ENCODE measurements at regions of chr3 and their contacts with region 1.

Region 1: GRCh38 chr3:64865863-64866570 is 178.2 kb upstream of the ADAMTS9 start:
- DNase-seq: no peak
- H3K4me3 ChIP-seq: no peak overlapping the region
- H3K27ac ChIP-seq: no peak overlapping the region
- H3K4me1 ChIP-seq: peaks cover 8% of the 10 kb centered on the region
- H3K27me3 ChIP-seq: no peaks in the 10 kb centered on the region
- CTCF ChIP-seq: no peak

Region 2: GRCh38 chr3:64756388-64756986 is 109.5 kb before region 1 on chr3:
- intact Hi-C with region 1: no loop called
- DNase-seq: no peak
- H3K4me3 ChIP-seq: no peak overlapping the region
- H3K27ac ChIP-seq: no peak overlapping the region
- H3K4me1 ChIP-seq: no peaks in the 10 kb centered on the region
- H3K27me3 ChIP-seq: no peaks in the 10 kb centered on the region
- CTCF ChIP-seq: no peak

Region 3: GRCh38 chr3:65013053-65013452 is 147.0 kb after region 1 on chr3:
- intact Hi-C with region 1: loop called (anchors 5 kb)
- DNase-seq: no peak
- H3K4me3 ChIP-seq: no peak overlapping the region
- H3K27ac ChIP-seq: no peak overlapping the region
- H3K4me1 ChIP-seq: no peaks in the 10 kb centered on the region
- H3K27me3 ChIP-seq: no peaks in the 10 kb centered on the region
- CTCF ChIP-seq: no peak

Region 4: DNA sequence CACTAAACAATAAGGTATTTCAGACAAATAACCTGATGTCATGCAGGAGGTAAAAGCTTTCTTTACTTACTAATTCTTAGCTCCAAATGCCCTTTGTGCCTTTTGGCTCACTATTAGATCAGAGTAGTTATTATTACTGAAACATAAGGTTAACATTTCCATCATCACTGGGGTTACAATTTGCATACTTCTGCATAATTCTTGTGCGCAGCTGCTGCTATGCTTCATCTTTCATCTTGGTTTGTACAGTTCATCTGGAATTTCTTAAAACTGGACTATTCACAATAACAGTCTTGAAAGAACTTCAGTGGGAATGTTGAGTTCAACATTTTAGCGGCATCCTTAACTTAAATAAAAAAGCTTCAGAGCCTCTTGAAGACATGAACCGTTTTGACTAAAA is 205.0 kb after region 1 on chr3:
- intact Hi-C with region 1: no loop called
- DNase-seq: no peak
- H3K4me3 ChIP-seq: no peak overlapping the region
- H3K27ac ChIP-seq: no peak overlapping the region
- H3K4me1 ChIP-seq: no peaks in the 10 kb centered on the region
- H3K27me3 ChIP-seq: no peaks in the 10 kb centered on the region
- CTCF ChIP-seq: no peak

Region 5: DNA sequence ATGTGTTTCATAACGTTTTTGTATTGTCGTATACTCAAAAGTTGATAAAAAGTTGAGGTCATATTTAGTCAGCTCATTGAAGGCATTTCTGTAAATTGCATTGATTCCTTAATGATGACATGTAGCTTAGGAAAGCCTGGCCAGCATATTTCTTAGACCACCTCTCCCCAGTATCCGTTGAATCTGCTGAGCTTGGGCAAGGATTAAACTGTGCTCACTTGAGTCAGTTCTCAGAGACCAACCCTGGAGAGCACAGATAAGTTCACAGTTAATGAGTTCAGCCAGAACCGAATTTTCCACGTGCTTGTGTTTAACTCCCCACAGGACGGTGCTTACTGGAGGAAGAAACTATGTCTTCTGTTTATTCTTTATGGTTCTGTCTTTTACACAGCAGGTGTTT is 1487.5 kb after region 1 on chr3:
- intact Hi-C with region 1: no loop called
- DNase-seq: no peak
- H3K4me3 ChIP-seq: no peak overlapping the region
- H3K27ac ChIP-seq: no peak overlapping the region
- H3K4me1 ChIP-seq: no peaks in the 10 kb centered on the region
- H3K27me3 ChIP-seq: no peaks in the 10 kb centered on the region
- CTCF ChIP-seq: no peak

Measured in colonic mucosa (tissue), 4 donors.